Transverse colon (tissue), 4 donors: ENCODE measurements at regions of chr11 and their contacts with region 1.

Region 1: GRCh38 chr11:66835768-66836405 is 7.4 kb upstream of the RCE1 start:
- DNase-seq: no peak
- H3K4me3 ChIP-seq: no peak overlapping the region
- H3K27ac ChIP-seq: no peak overlapping the region
- H3K4me1 ChIP-seq: peaks cover 0 to 10% (median 0%) of the 10 kb centered on the region in 4 donors
- H3K27me3 ChIP-seq: no peaks in the 10 kb centered on the region
- CTCF ChIP-seq: no peak
- EP300 ChIP-seq: no peak
- POLR2A ChIP-seq: no peak

Region 2: GRCh38 chr11:66559142-66559865 is 276.6 kb before region 1 on chr11:
- in situ Hi-C with region 1: loop called in 1 of 4 experiments (anchors 25 kb)
- intact Hi-C with region 1: loop called (anchors 10 kb)
- DNase-seq: peak; percentile 20
- H3K4me3 ChIP-seq: peak overlapping the region in 1 of 4 donors; percentile 1
- H3K27ac ChIP-seq: no peak overlapping the region
- H3K4me1 ChIP-seq: peaks cover 6 to 9% (median 8%) of the 10 kb centered on the region in 4 donors
- H3K27me3 ChIP-seq: peaks cover 25% of the 10 kb centered on the region
- CTCF ChIP-seq: no peak
- EP300 ChIP-seq: no peak
- POLR2A ChIP-seq: no peak

Region 3: DNA sequence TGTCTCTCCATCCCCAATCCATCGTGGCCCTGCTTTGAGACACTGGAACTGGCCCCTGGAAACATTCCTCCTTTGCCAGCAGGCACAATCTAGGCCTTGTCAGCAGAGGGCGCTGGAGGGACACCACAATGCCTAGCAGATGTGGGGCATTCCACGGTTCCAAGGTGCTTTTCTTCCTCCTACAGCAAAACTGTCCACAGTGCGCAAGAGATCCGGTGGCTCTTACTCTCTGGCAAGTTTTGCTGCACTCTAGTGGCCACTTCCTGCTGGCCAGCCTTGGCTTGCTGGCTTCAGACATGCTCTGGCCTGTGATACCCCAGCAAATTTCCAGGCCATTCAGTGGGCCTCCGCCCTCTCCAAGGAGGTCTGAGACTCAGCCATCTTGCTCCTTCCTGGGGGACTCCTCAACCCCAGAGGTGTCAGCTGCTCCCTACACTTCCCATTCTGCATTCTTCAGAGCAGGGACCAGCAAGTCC is 141.1 kb before region 1 on chr11:
- in situ Hi-C with region 1: loop called (anchors 5 to 10 kb)
- intact Hi-C with region 1: loop called (anchors 5 kb)
- DNase-seq: peak; percentile 93
- H3K4me3 ChIP-seq: no peak overlapping the region
- H3K27ac ChIP-seq: peak overlapping the region in 1 of 4 donors; percentile 12
- H3K4me1 ChIP-seq: peaks cover 0 to 3% (median 0%) of the 10 kb centered on the region in 4 donors
- H3K27me3 ChIP-seq: no peaks in the 10 kb centered on the region
- CTCF ChIP-seq: peak; percentile 92 to 98 (median 96)
- EP300 ChIP-seq: no peak
- POLR2A ChIP-seq: no peak

Region 4: GRCh38 chr11:67071420-67072284 is 235.8 kb after region 1 on chr11:
- in situ Hi-C with region 1: no loop called
- intact Hi-C with region 1: no loop called
- DNase-seq: peak; percentile 85
- H3K4me3 ChIP-seq: peak overlapping the region in 3 of 4 donors; percentile 10 to 45 (median 29)
- H3K27ac ChIP-seq: no peak overlapping the region
- H3K4me1 ChIP-seq: peaks cover 0 to 7% (median 3%) of the 10 kb centered on the region in 4 donors
- H3K27me3 ChIP-seq: no peaks in the 10 kb centered on the region
- CTCF ChIP-seq: peak; percentile 82 to 92 (median 86)
- EP300 ChIP-seq: no peak
- POLR2A ChIP-seq: no peak